Endothelial cell of umbilical vein (primary cell): ENCODE measurements at regions of chr18 and their contacts with region 1.

Region 1: DNA sequence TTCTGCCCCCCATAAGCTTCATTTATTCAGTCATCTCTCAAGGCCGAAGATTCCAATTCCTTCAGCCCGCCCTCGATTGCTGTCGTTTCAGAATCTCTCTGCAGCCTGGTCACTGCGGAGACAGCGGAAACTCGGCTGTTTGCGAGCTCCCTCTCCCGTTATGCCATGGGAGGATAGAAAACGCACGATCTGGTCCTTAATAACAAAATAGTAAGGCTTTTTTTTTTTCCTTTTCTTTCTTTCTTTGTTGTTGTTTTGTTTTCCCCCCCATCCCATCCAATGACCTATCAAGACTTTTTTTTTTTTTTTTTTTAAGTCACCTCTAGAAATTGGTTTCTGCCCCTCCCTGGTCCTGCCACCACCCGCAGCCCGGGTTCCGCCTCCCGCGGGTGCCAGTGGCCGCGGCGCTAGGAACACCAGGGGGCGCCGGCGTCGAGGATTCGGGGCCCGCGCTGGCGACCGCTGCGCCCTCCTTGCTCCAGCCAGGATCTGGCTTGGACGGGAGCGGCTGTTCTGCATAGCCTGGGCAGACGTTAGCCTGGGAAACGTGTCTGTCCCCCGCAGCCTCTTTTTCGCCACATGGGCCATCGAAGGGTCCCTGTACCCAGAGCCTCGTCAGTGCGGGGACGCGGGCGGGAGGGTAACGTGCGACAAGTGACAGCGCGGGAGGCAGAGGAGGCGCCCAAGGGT is 10.1 kb downstream of the CPLX4 start:
- DNase-seq: peak; percentile 50
- H3K4me3 ChIP-seq: no peak overlapping the region
- H3K27ac ChIP-seq: no peak overlapping the region
- H3K4me1 ChIP-seq: peaks cover 3% of the 10 kb centered on the region
- H3K27me3 ChIP-seq: peaks cover 17 to 29% of the 10 kb centered on the region in 2 experiments
- CTCF ChIP-seq: peak; percentile 74 to 83
- POLR2A ChIP-seq: no peak

Region 2: DNA sequence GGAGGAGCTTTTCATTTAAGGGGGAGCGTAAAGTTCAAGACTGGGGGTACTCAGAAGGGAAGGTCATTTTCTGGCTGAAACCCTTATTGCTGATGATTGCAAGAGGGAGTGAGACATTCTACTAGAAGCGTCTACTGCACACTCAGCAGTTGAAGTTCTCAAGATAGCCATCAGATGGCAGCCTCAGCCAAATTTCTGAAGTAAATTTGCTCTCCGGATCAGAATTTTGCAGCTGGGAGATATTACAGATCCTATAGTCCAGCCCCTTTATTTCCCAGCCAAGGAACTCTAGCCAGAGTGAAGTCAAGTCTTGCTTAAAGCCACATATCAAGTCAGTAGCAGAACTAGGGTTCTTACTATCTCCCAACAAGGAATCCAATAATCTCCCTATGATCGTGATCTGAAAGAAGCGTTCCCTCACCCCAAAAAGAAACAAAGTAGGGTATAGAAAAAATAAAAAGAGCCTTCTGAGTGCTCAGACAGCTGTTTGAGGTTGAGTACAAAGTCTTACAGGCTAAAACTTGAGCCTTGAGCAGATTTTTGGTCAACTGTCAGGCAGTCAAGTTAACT is 59.1 kb before region 1 on chr18:
- CTCF ChIA-PET with region 1: interaction called, 51 read pairs
- POLR2A ChIA-PET with region 1: no interaction called
- dilution Hi-C with region 1: no loop called
- intact Hi-C with region 1: loop called (anchors 1 kb)
- DNase-seq: peak; percentile 69
- H3K4me3 ChIP-seq: no peak overlapping the region
- H3K27ac ChIP-seq: no peak overlapping the region
- H3K4me1 ChIP-seq: no peaks in the 10 kb centered on the region
- H3K27me3 ChIP-seq: peaks cover 5 to 16% of the 10 kb centered on the region in 2 experiments
- CTCF ChIP-seq: peak; percentile 51 to 70
- POLR2A ChIP-seq: no peak

Region 3: GRCh38 chr18:59318460-59319050 is 10.2 kb after region 1 on chr18 and contains the start of gene CPLX4:
- CTCF ChIA-PET with region 1: interaction called, 15 read pairs
- POLR2A ChIA-PET with region 1: no interaction called
- dilution Hi-C with region 1: no loop called
- intact Hi-C with region 1: no loop called
- DNase-seq: no peak
- H3K4me3 ChIP-seq: no peak within 1 kb of the TSS
- H3K27ac ChIP-seq: no peak within 1 kb of the TSS
- H3K4me1 ChIP-seq: no peaks in the 10 kb centered on the region
- H3K27me3 ChIP-seq: peaks cover 10 to 11% of the 10 kb centered on the region in 2 experiments
- CTCF ChIP-seq: no peak
- POLR2A ChIP-seq: no peak
- total RNA-seq, gene CPLX4: not detected in 2 replicates

Region 4: DNA sequence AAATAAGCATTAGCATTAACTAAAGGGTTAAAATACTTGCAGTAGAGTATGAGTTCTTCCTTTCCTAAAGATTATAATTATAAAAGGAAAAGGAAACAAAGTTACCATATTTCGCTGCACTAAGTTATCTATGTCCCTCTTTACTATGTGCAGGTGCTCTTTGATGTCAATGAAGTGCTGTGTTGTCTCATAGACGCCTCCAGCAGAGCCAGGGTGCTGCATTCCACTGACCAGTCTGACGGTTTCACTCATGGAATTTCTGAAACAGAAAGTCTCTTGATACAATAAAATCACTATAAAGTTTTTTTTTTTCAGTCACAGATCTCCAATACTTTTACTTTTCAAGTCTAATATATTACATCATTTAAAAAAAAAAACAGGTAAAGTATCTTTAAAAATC is 24.6 kb after region 1 on chr18:
- CTCF ChIA-PET with region 1: interaction called, 11 read pairs
- POLR2A ChIA-PET with region 1: no interaction called
- dilution Hi-C with region 1: no loop called
- intact Hi-C with region 1: no loop called
- DNase-seq: no peak
- H3K4me3 ChIP-seq: no peak overlapping the region
- H3K27ac ChIP-seq: no peak overlapping the region
- H3K4me1 ChIP-seq: no peaks in the 10 kb centered on the region
- H3K27me3 ChIP-seq: no peaks in the 10 kb centered on the region
- CTCF ChIP-seq: no peak
- POLR2A ChIP-seq: no peak

Region 5: GRCh38 chr18:59358712-59359575 is 50.6 kb after region 1 on chr18 and contains the start of gene LMAN1:
- CTCF ChIA-PET with region 1: interaction called, 16 read pairs
- POLR2A ChIA-PET with region 1: no interaction called
- dilution Hi-C with region 1: no loop called
- intact Hi-C with region 1: no loop called
- DNase-seq: peak; percentile 93
- H3K4me3 ChIP-seq: peak within 1 kb of the TSS; percentile 88 to 94 (median 89)
- H3K27ac ChIP-seq: peak within 1 kb of the TSS; percentile 73
- H3K4me1 ChIP-seq: peaks cover 18% of the 10 kb centered on the region
- H3K27me3 ChIP-seq: peaks cover 22 to 38% of the 10 kb centered on the region in 2 experiments
- CTCF ChIP-seq: no peak
- POLR2A ChIP-seq: peak; percentile 79
- total RNA-seq, gene LMAN1: 92.5 and 98.3 TPM in 2 replicates

Region 6: DNA sequence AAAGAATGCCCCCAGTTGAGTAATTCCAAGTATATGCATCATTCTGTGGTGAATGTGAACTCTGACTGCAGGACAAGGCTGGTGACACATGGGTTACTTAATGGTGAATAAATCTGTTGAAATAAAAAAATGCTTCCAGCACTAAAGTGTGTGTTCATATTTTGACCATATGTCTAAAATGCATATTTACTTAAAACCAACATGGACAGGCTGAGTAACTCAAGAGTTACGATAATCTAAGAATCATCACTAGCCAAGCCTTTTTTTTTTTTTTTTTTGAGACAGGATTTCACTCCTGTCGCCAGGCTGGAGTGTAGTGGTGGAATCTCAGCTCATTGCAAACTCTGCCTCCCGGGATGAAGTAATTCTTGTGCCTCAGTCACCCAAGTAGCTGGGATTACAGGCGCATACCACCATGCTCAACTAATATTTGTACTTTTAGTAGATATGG is 435.9 kb after region 1 on chr18:
- CTCF ChIA-PET with region 1: no interaction called
- POLR2A ChIA-PET with region 1: no interaction called
- dilution Hi-C with region 1: no loop called
- intact Hi-C with region 1: no loop called
- DNase-seq: no peak
- H3K4me3 ChIP-seq: no peak overlapping the region
- H3K27ac ChIP-seq: no peak overlapping the region
- H3K4me1 ChIP-seq: no peaks in the 10 kb centered on the region
- H3K27me3 ChIP-seq: no peaks in the 10 kb centered on the region
- CTCF ChIP-seq: no peak
- POLR2A ChIP-seq: no peak

Region 7: DNA sequence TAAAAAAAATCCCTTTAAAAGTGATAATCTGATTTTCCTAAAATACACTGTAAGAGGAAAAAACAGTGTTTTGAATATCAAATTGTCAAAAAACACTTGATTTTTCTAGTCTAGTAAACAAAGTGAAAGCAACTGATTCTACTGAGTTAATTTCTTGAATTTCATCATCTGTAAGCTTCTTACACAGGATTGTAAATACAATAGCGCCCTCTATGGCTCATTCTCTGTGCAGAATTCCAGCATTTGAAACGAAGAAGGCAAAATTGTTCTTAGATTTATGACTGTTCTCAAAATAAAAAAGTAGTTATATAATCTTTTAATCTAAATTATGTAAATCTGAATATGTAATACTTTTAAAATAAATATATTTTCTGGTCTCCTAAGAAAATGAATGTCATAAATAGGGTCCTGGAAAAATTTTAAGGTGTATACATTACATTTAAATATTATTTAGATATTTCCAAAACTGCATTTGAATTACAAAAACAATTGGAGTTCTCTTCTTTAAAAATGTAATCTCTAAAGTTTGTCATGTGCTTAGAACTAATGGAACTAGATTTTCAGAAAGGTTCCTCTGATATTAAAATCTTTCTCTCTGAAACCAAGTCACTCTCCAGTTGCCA is 1241.1 kb after region 1 on chr18:
- CTCF ChIA-PET with region 1: no interaction called
- POLR2A ChIA-PET with region 1: no interaction called
- dilution Hi-C with region 1: no loop called
- intact Hi-C with region 1: loop called (anchors 5 kb)
- DNase-seq: peak; percentile 64
- H3K4me3 ChIP-seq: no peak overlapping the region
- H3K27ac ChIP-seq: no peak overlapping the region
- H3K4me1 ChIP-seq: no peaks in the 10 kb centered on the region
- H3K27me3 ChIP-seq: no peaks in the 10 kb centered on the region
- CTCF ChIP-seq: peak; percentile 53 to 57
- POLR2A ChIP-seq: no peak